ENCODE measurements at regions of chr3 and their contacts with region 1.

Region 1: DNA sequence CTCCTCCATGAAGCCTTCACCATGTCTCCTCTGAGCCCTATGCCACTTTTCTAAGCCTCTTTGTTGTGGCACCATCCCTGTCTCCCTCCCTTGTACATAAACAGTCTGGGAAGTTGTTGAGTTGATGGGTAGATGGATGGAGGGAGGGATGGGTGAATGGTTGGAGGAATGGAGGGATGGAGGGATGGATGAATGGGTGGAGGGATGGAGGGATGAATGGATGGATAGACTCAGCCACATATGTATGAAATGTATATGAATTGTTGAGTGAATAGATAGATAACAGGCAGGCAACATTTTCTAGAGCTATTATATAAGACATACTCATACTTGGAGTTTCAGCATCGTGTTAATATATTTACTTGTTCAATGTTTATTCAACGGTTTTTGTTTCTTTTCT is 58.3 kb upstream of the HES1 start:
- DNase-seq: no peak
- ATAC-seq: no peak
- H3K4me3 Mint-ChIP-seq: no peak overlapping the region
- H3K27ac Mint-ChIP-seq: no peak overlapping the region
- H3K4me1 Mint-ChIP-seq: peaks cover 11% of the 10 kb centered on the region
- H3K27me3 Mint-ChIP-seq: peaks cover 3% of the 10 kb centered on the region
- CTCF ChIP-seq: no peak

Region 2: DNA sequence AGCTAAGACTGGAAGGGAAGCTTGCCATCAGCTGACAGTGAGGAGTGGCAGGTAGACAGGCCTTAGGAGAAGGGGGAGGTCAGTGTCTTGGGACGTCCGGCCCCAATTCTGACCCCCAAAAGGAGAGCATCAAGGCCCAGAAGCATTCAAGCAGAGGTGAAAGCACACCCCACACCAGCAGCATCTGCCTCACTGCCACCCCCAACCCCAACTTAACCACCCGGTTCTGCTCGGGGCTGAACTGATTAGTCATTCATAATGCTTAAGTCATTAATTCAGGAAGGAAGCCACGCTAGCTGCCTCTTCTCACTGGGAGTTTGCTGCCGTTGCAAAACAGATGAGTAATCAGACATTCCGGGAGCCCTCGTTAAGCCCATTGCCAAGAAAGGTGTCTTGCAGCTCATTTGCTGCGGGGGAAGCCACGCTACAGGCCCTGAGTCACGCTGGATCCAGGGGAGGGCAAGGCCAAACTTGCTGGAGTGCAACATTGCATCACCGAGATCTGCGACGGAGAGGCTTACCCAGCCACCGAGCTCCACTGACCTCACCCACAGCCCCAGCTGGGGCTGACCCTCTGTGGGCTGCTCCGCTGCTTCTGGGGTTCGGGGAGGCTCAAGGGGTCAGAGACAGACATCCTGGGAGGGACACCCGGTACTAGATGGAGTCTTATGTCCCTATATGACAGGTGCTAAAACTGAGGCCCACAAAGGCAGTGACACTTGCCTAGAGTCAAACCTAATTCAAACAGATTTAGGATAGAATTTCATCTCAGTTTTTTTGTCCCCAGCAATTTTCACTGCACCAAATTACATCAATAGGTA is 12.0 kb after region 1 on chr3:
- CTCF ChIA-PET with region 1: no interaction called
- POLR2A ChIA-PET with region 1: interaction called, 18 read pairs
- intact Hi-C with region 1: loop called (anchors 1 kb)
- DNase-seq: peak; percentile 41
- ATAC-seq: peak; percentile 86
- H3K4me3 Mint-ChIP-seq: peak overlapping the region; percentile 9
- H3K27ac Mint-ChIP-seq: peak overlapping the region; percentile 71
- H3K4me1 Mint-ChIP-seq: peaks cover 43% of the 10 kb centered on the region
- H3K27me3 Mint-ChIP-seq: no peaks in the 10 kb centered on the region
- CTCF ChIP-seq: no peak